ENCODE measurements at regions of chr13 and their contacts with region 1.

Region 1: DNA sequence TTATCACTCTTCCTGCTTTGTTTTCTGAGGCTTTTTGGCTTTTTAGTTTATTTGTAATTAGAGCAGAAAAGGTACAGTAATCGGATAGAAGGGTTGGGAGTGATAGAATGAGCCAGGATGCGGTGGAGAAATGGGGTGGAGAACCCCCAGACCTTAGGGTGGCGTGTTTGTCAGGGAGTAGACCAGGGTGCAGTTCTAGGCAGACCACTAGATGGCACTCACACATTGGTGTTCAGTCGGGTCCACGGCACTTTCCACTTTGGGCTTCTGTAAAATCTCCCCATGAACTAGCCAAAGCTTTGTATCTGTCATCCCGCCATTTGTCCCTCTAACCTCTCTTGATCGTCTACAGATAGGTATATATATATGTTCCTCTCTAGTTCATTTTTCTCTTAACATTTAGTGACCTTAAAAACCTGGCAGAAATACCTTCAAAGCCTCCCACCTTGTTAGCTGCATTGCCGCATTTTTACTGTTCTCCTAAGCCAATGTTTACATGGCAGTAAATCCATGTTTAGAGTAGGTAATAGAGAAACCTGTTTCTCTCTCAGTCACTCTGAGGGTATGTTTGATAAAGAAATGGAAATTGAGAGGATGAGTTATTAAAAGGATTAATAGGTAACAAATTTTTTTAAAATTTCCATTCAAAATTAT is 154.9 kb downstream of the TM9SF2 start:
- DNase-seq: peak; percentile 89
- H3K4me3 Mint-ChIP-seq: peak overlapping the region; percentile 48
- H3K27ac Mint-ChIP-seq: peak overlapping the region; percentile 95
- H3K4me1 Mint-ChIP-seq: peaks cover 50% of the 10 kb centered on the region
- H3K27me3 Mint-ChIP-seq: no peaks in the 10 kb centered on the region

Region 2: GRCh38 chr13:99666146-99666805 is 10.1 kb after region 1 on chr13:
- CTCF ChIA-PET with region 1: interaction called, 13 read pairs
- POLR2A ChIA-PET with region 1: no interaction called
- DNase-seq: no peak
- H3K4me3 Mint-ChIP-seq: no peak overlapping the region
- H3K27ac Mint-ChIP-seq: no peak overlapping the region
- H3K4me1 Mint-ChIP-seq: no peaks in the 10 kb centered on the region
- H3K27me3 Mint-ChIP-seq: peaks cover 8% of the 10 kb centered on the region

Region 3: GRCh38 chr13:100195568-100195967 is 539.3 kb after region 1 on chr13:
- CTCF ChIA-PET with region 1: no interaction called
- POLR2A ChIA-PET with region 1: no interaction called
- DNase-seq: no peak
- H3K4me3 Mint-ChIP-seq: no peak overlapping the region
- H3K27ac Mint-ChIP-seq: no peak overlapping the region
- H3K4me1 Mint-ChIP-seq: no peaks in the 10 kb centered on the region
- H3K27me3 Mint-ChIP-seq: no peaks in the 10 kb centered on the region

Region 4: DNA sequence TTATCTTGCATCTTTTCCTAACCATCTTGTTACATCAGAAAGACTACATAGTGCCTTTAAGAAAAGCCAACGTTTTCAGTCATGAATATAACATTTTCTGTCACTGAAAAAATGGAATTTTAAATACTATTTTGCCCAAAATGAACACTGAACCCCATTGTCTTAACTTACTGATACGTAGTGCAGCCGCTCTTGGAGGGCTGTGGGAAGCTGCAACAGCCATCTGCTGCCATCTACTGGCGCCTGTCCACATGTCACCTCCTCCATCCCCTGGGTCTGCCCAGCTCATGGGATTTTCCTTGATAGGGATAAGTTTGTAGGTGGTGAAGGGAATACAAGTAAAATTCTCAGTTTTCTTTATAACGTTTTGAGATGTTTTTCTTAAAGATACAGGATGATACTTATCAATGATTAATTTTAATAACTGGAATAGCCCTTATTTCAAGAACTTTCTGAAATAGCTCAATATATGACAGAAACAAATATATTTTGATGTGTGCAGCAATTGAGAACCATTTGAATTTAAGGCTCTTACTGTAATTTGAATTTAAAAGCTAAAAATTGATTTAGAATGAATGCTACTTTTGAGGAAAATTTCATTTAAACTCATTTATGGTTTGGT is 858.7 kb after region 1 on chr13:
- CTCF ChIA-PET with region 1: interaction called, 15 read pairs
- POLR2A ChIA-PET with region 1: no interaction called
- DNase-seq: peak; percentile 72
- H3K4me3 Mint-ChIP-seq: no peak overlapping the region
- H3K27ac Mint-ChIP-seq: no peak overlapping the region
- H3K4me1 Mint-ChIP-seq: peaks cover 23% of the 10 kb centered on the region
- H3K27me3 Mint-ChIP-seq: peaks cover 6% of the 10 kb centered on the region

Measured in activated CD4-positive, alpha-beta T cell treated with anti-CD3 and anti-CD28 coated beads, Interleukin-2, amount 10 ng/mL, durations not matched to agents 7 days and 5 days (primary cell).